ENCODE measurements at regions of chr1 and their contacts with region 1.

Region 1: GRCh38 chr1:30888391-30888790 is 20.2 kb downstream of the SDC3 start:
- DNase-seq: no peak
- ATAC-seq: peak in 3 of 4 donors; percentile 9 to 37 (median 17)
- H3K4me3 ChIP-seq: no peak overlapping the region
- H3K27ac ChIP-seq: no peak overlapping the region
- H3K4me1 ChIP-seq: no peaks in the 10 kb centered on the region
- H3K27me3 ChIP-seq: no peaks in the 10 kb centered on the region
- CTCF ChIP-seq: no peak
- POLR2A ChIP-seq: no peak

Region 2: DNA sequence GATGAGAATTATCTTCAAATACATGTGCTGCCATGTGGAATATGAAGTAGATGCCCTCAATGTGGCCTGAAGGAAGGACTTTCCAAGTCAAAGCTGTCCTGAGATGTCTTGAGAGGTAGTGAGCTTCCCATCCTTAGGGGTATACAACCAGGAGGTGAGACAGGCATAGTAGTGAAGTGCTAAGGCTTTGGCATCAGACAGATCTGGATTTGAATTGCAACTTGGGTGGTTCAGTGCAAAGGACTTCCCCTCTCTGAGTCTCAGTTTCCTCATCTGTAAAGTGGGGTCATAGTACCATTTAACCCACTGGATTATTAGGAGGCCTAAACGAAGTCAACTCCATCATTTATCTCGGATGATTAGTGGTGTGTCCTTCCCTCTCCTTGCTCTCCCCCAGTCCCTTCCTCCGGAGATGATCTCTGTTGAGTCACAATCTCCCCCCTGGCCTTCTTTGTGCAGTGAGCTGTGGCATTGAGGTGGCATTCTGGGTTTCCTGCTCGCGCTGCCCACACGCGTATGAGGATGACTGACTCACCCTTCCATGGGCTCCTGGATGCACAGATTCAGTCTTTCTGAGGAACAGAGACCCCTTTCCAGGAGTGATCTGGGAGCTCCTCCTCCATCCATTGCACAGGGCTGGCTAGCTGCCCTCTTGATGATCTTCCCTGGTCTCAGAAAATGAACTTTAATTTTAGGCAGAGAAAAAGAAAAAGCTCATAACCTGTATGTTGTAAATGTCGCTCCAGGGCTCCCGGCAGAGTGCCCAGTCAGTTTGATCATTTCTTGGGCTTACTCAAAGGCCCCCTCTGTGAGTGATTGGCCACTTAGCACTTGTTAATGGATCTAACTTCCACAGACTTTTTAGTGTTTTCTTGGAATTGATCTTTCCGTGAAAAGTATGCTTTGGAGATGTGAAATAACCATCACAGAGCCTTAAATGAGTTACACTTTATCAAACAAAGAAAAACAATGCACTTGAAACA is 1297.5 kb before region 1 on chr1:
- intact Hi-C with region 1: loop called in 1 of 2 experiments (anchors 10 kb)
- DNase-seq: no peak
- ATAC-seq: no peak
- H3K4me3 ChIP-seq: no peak overlapping the region
- H3K27ac ChIP-seq: no peak overlapping the region
- H3K4me1 ChIP-seq: no peaks in the 10 kb centered on the region
- H3K27me3 ChIP-seq: no peaks in the 10 kb centered on the region
- CTCF ChIP-seq: no peak
- POLR2A ChIP-seq: no peak